ENCODE measurements at regions of chr3 and their contacts with region 1.

Region 1: GRCh38 chr3:126357295-126358037 is at the start of gene KLF15:
- DNase-seq: peak; percentile 96
- H3K4me3 ChIP-seq: peak within 1 kb of the TSS; percentile 97 to 99 (median 98)
- H3K27ac ChIP-seq: peak within 1 kb of the TSS; percentile 92 to 100 (median 98)
- H3K4me1 ChIP-seq: peaks cover 41 to 44% (median 42%) of the 10 kb centered on the region in 4 donors
- H3K27me3 ChIP-seq: peaks cover 0 to 15% (median 0%) of the 10 kb centered on the region in 4 donors
- CTCF ChIP-seq: no peak
- EP300 ChIP-seq: no peak
- POLR2A ChIP-seq: no peak
- total RNA-seq, gene KLF15: 84.3 to 208 (median 93.6) TPM

Region 2: DNA sequence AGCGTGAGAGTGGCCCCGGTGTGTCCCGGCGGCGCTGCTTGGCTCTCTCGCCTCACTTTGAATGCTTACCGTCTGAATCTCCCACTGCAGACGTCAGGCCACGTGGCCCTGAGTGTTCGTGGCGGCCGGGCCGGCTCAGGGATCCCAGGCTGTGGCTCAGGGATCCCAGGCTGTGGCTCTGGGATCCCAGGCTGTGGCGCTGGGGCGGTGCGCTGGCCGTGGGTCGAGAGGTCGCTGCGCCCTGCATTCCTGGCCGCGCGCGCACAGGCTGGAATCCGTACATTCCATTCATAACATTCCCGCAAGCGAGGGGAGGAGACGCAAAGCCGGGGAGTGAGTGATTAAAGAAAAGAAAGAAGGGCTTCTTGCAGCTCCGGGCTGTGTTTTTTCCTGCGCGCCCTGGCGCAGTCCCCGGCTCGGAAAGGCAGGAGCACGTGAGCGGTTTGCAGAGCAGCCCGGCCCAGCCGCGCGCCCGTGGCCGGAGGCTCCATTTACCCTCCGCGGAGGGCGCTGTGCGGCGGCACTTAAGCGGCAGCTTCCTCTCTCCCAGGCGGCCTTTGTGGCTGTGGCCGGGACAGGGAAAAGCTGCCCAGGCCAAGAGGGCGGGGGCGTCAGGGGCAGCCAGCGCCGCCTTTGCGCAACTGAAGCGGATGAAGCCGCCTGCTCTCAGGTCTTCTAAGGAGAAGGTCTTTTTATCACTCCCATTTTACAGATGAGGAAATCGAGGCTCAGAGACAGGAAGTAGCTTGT is 90.1 kb before region 1 on chr3:
- intact Hi-C with region 1: loop called (anchors 1 kb)
- DNase-seq: peak; percentile 94
- H3K4me3 ChIP-seq: peak overlapping the region; percentile 36 to 47 (median 42)
- H3K27ac ChIP-seq: peak overlapping the region; percentile 90 to 97 (median 94)
- H3K4me1 ChIP-seq: peaks cover 44 to 83% (median 78%) of the 10 kb centered on the region in 4 donors
- H3K27me3 ChIP-seq: no peaks in the 10 kb centered on the region
- CTCF ChIP-seq: peak in 2 of 3 experiments; percentile 14 to 26
- EP300 ChIP-seq: peak; percentile 92
- POLR2A ChIP-seq: peak; percentile 36

Region 3: GRCh38 chr3:126304704-126305103 is 52.8 kb before region 1 on chr3:
- intact Hi-C with region 1: loop called (anchors 5 kb)
- DNase-seq: no peak
- H3K4me3 ChIP-seq: no peak overlapping the region
- H3K27ac ChIP-seq: no peak overlapping the region
- H3K4me1 ChIP-seq: peaks cover 0 to 18% (median 10%) of the 10 kb centered on the region in 4 donors
- H3K27me3 ChIP-seq: no peaks in the 10 kb centered on the region
- CTCF ChIP-seq: no peak
- EP300 ChIP-seq: no peak
- POLR2A ChIP-seq: no peak

Region 4: GRCh38 chr3:126782554-126782953 is 425.1 kb after region 1 on chr3:
- intact Hi-C with region 1: no loop called
- DNase-seq: no peak
- H3K4me3 ChIP-seq: no peak overlapping the region
- H3K27ac ChIP-seq: peak overlapping the region; percentile 3 to 57 (median 46)
- H3K4me1 ChIP-seq: peaks cover 0 to 16% (median 7%) of the 10 kb centered on the region in 4 donors
- H3K27me3 ChIP-seq: no peaks in the 10 kb centered on the region
- CTCF ChIP-seq: no peak
- EP300 ChIP-seq: no peak
- POLR2A ChIP-seq: no peak